ENCODE measurements at regions of chr7 and their contacts with region 1.

Region 1: GRCh38 chr7:117715784-117716445 is 157.3 kb downstream of the CTTNBP2 start:
- DNase-seq: peak; percentile 76
- H3K4me3 ChIP-seq: no peak overlapping the region
- H3K27ac ChIP-seq: no peak overlapping the region
- H3K4me1 ChIP-seq: no peaks in the 10 kb centered on the region
- H3K27me3 ChIP-seq: no peaks in the 10 kb centered on the region
- CTCF ChIP-seq: peak; percentile 28

Region 2: GRCh38 chr7:117399820-117400422 is 316.0 kb before region 1 on chr7:
- intact Hi-C with region 1: loop called (anchors 5 kb)
- DNase-seq: no peak
- H3K4me3 ChIP-seq: no peak overlapping the region
- H3K27ac ChIP-seq: no peak overlapping the region
- H3K4me1 ChIP-seq: no peaks in the 10 kb centered on the region
- H3K27me3 ChIP-seq: no peaks in the 10 kb centered on the region
- CTCF ChIP-seq: peak; percentile 40

Region 3: GRCh38 chr7:117458977-117459583 is 256.8 kb before region 1 on chr7:
- intact Hi-C with region 1: loop called (anchors 5 kb)
- DNase-seq: no peak
- H3K4me3 ChIP-seq: no peak overlapping the region
- H3K27ac ChIP-seq: no peak overlapping the region
- H3K4me1 ChIP-seq: no peaks in the 10 kb centered on the region
- H3K27me3 ChIP-seq: no peaks in the 10 kb centered on the region
- CTCF ChIP-seq: peak; percentile 51

Region 4: GRCh38 chr7:117612642-117613041 is 103.3 kb before region 1 on chr7:
- intact Hi-C with region 1: no loop called
- DNase-seq: no peak
- H3K4me3 ChIP-seq: no peak overlapping the region
- H3K27ac ChIP-seq: no peak overlapping the region
- H3K4me1 ChIP-seq: no peaks in the 10 kb centered on the region
- H3K27me3 ChIP-seq: no peaks in the 10 kb centered on the region
- CTCF ChIP-seq: no peak

Region 5: DNA sequence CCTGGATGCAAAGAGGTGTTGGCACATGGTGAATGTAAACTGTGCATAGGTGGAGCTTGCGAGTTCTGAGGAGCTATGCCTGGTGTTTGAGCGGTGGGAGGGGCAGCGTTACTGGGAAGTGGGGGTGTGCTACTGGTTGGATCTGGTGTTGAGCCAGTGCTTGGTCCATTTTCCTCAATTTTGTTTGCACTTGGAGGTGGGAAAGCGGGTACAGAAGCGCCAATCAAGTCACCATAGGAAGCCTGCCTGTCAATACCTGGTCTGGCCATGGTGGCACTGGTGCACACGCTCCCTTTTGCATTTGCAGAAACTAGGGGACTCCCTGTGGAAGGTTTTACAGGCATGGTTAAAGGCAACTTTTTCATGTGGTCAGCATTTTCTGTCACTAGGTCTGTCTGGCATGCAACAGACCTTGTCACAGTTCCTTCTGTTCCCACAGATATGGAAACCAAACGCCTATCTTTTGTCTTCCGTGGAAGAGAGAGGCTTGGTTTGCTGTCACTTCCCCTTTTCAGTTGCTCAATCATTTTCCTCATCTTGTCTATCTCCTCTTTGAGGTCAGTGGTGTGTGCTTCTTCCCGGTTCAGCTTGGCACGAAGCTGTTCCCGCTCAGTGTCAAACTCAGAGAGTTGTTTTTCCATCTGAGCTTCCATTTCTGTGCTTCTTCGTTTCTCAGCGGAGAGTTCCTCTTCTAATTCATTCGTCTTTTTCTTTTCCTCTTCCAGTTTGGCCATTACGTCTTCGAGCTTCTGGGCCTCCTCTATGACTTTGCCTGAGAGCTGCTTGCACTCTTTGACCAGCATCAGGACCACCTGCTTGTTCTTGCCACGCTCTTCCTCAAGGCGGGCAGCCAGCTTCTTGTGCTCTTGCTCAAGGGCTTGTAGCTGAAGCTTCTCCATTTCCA is 76.2 kb after region 1 on chr7:
- intact Hi-C with region 1: no loop called
- DNase-seq: no peak
- H3K4me3 ChIP-seq: no peak overlapping the region
- H3K27ac ChIP-seq: no peak overlapping the region
- H3K4me1 ChIP-seq: no peaks in the 10 kb centered on the region
- H3K27me3 ChIP-seq: no peaks in the 10 kb centered on the region
- CTCF ChIP-seq: no peak

Region 6: DNA sequence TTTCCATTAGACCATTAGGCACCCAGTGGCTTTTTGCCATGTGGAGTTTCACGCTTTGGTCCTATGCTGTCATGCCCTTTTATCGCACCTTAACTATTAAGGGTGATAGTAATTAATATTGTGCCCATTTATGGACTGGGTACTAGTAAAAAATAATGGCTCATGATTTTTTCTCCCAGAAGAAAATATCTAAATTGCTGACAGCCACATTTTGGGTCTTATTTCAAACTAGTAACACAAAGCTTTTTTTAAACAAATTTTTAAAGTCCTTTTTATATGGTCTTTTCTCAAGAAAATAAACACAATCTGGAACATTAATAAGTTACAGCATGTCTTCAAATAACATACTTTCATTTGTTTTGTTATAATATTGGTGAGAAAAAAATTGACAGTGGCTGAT is 688.3 kb after region 1 on chr7:
- intact Hi-C with region 1: no loop called
- DNase-seq: no peak
- H3K4me3 ChIP-seq: no peak overlapping the region
- H3K27ac ChIP-seq: no peak overlapping the region
- H3K4me1 ChIP-seq: no peaks in the 10 kb centered on the region
- H3K27me3 ChIP-seq: no peaks in the 10 kb centered on the region
- CTCF ChIP-seq: no peak